ENCODE measurements at regions of chr13 and their contacts with region 1.

Region 1: GRCh38 chr13:46160471-46161066 is 21.4 kb downstream of the LCP1 start:
- DNase-seq: peak in 1 of 2 donors; percentile 93
- ATAC-seq: peak; percentile 80 to 93 (median 82)
- H3K4me3 ChIP-seq: no peak overlapping the region
- H3K4me3 Mint-ChIP-seq: peak overlapping the region; percentile 80
- H3K27ac ChIP-seq: peak overlapping the region; percentile 67
- H3K27ac Mint-ChIP-seq: peak overlapping the region; percentile 88 to 96
- H3K4me1 ChIP-seq: peaks cover 24% of the 10 kb centered on the region
- H3K4me1 Mint-ChIP-seq: peaks cover 59 to 67% of the 10 kb centered on the region in 2 donors
- H3K27me3 ChIP-seq: no peaks in the 10 kb centered on the region
- H3K27me3 Mint-ChIP-seq: no peaks in the 10 kb centered on the region
- CTCF ChIP-seq: peak; percentile 80

Region 2: GRCh38 chr13:46211483-46212351 is 51.1 kb after region 1 on chr13 and contains the start of gene LRRC63:
- intact Hi-C with region 1: loop called (anchors 1 kb)
- DNase-seq: peak; percentile 74 to 89
- ATAC-seq: peak; percentile 98 to 100 (median 99)
- H3K4me3 ChIP-seq: peak within 1 kb of the TSS; percentile 56
- H3K4me3 Mint-ChIP-seq: peak within 1 kb of the TSS; percentile 93
- H3K27ac ChIP-seq: peak within 1 kb of the TSS; percentile 68
- H3K27ac Mint-ChIP-seq: peak within 1 kb of the TSS; percentile 79 to 90
- H3K4me1 ChIP-seq: peaks cover 6% of the 10 kb centered on the region
- H3K4me1 Mint-ChIP-seq: peaks cover 16 to 17% of the 10 kb centered on the region in 2 donors
- H3K27me3 ChIP-seq: no peaks in the 10 kb centered on the region
- H3K27me3 Mint-ChIP-seq: no peaks in the 10 kb centered on the region
- CTCF ChIP-seq: no peak
- total RNA-seq, gene LRRC63: 0.32 to 0.95 (median 0.40) TPM

Region 3: GRCh38 chr13:46288570-46289259 is 128.1 kb after region 1 on chr13:
- intact Hi-C with region 1: loop called (anchors 2 kb)
- DNase-seq: peak in 1 of 2 donors; percentile 80
- ATAC-seq: peak; percentile 72 to 87 (median 81)
- H3K4me3 ChIP-seq: no peak overlapping the region
- H3K4me3 Mint-ChIP-seq: no peak overlapping the region
- H3K27ac ChIP-seq: no peak overlapping the region
- H3K27ac Mint-ChIP-seq: no peak overlapping the region
- H3K4me1 ChIP-seq: no peaks in the 10 kb centered on the region
- H3K4me1 Mint-ChIP-seq: peaks cover 0 to 7% of the 10 kb centered on the region in 2 donors
- H3K27me3 ChIP-seq: no peaks in the 10 kb centered on the region
- H3K27me3 Mint-ChIP-seq: no peaks in the 10 kb centered on the region
- CTCF ChIP-seq: peak; percentile 84

Region 4: GRCh38 chr13:46382224-46382623 is 221.7 kb after region 1 on chr13:
- intact Hi-C with region 1: no loop called
- DNase-seq: no peak
- ATAC-seq: no peak
- H3K4me3 ChIP-seq: no peak overlapping the region
- H3K4me3 Mint-ChIP-seq: no peak overlapping the region
- H3K27ac ChIP-seq: peak overlapping the region; percentile 55
- H3K27ac Mint-ChIP-seq: no peak overlapping the region
- H3K4me1 ChIP-seq: peaks cover 18% of the 10 kb centered on the region
- H3K4me1 Mint-ChIP-seq: peaks cover under 1 to 6% of the 10 kb centered on the region in 2 donors
- H3K27me3 ChIP-seq: no peaks in the 10 kb centered on the region
- H3K27me3 Mint-ChIP-seq: peaks cover 26% of the 10 kb centered on the region in 2 donors
- CTCF ChIP-seq: no peak